Caco-2 (cell line): ENCODE measurements at regions of chr16 and their contacts with region 1.

Region 1: DNA sequence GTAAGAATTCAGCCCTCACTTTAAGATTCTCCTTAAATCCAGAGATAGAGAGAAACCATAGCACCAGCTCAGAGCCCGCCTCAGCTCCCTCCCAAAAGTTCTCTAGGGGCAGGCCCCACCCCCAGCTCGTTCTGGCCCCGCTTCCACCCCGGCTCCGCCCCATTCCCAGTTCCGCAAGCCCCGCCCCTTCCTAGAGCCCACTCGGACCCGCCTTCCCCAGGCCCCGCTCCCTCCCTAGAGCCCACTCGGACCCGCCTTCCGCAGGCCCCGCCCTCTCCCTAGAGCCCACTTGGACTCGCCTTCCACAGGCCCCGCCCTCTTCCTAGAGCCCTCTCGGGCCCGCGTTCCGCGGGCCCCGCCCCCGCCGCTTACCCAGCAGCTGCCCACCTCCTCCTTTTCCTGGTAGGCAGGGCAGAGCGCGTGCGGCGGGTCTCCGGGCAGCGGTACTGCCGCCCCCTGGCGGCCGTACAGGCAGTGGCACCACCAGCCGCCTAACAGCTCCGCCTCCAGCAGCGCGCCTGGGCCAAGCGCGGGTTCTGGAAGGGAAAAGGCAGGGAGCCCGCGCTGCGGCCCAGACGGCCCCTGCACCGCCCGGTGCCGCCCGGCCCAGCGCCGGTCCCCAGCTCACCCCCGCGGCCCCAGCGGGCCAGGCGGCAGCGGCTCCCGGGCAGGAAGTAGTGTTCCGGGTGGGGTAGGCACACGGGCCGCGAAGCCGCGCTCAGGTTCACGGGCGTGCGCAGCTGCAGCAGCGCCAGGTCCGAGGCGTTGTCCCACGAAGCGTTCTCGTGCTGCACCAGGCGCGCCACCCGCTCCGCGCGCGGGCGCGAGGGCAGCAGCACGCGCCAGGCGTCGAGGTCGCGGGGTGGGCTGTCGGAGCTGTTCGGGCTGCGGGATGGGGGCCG is 6.8 kb upstream of the PRSS8 start:
- DNase-seq: peak; percentile 98 to 99
- H3K4me3 ChIP-seq: peak overlapping the region; percentile 46
- H3K4me3 Mint-ChIP-seq: peak overlapping the region; percentile 66
- H3K27ac Mint-ChIP-seq: peak overlapping the region; percentile 83
- H3K4me1 ChIP-seq: peaks cover 54% of the 10 kb centered on the region
- H3K4me1 Mint-ChIP-seq: peaks cover 20% of the 10 kb centered on the region
- H3K27me3 ChIP-seq: no peaks in the 10 kb centered on the region
- H3K27me3 Mint-ChIP-seq: no peaks in the 10 kb centered on the region
- CTCF ChIP-seq: peak; percentile 81 to 93

Region 2: GRCh38 chr16:30984669-30985400 is 157.5 kb before region 1 on chr16 and contains the start of gene HSD3B7:
- CTCF ChIA-PET with region 1: interaction called, 13 read pairs
- POLR2A ChIA-PET with region 1: no interaction called
- intact Hi-C with region 1: loop called (anchors 5 kb)
- DNase-seq: peak; percentile 83 to 90
- H3K4me3 ChIP-seq: 0 out of 2 replicates have a peak within 1 kb of the TSS, but pooled peaks have one; percentile 15
- H3K4me3 Mint-ChIP-seq: peak within 1 kb of the TSS; percentile 59
- H3K27ac Mint-ChIP-seq: no peak within 1 kb of the TSS
- H3K4me1 ChIP-seq: peaks cover 7% of the 10 kb centered on the region
- H3K4me1 Mint-ChIP-seq: peaks cover 6% of the 10 kb centered on the region
- H3K27me3 ChIP-seq: no peaks in the 10 kb centered on the region
- H3K27me3 Mint-ChIP-seq: no peaks in the 10 kb centered on the region
- CTCF ChIP-seq: peak; percentile 83 to 93
- total RNA-seq, gene HSD3B7: 1.3 and 2.4 TPM in 2 replicates

Region 3: GRCh38 chr16:31073968-31074813 is 68.2 kb before region 1 on chr16 and contains the starts of genes ZNF646 and ZNF668:
- CTCF ChIA-PET with region 1: interaction called, 14 read pairs
- POLR2A ChIA-PET with region 1: interaction called, 22 read pairs
- intact Hi-C with region 1: loop called (anchors 1 kb)
- DNase-seq: peak; percentile 94 to 98
- H3K4me3 ChIP-seq: peak within 1 kb of the TSS; percentile 79
- H3K4me3 Mint-ChIP-seq: peak within 1 kb of the TSS; percentile 84
- H3K27ac Mint-ChIP-seq: peak within 1 kb of the TSS; percentile 58
- H3K4me1 ChIP-seq: peaks cover 9% of the 10 kb centered on the region; the same call in 1 of the 2 replicates
- H3K4me1 Mint-ChIP-seq: peaks cover 7% of the 10 kb centered on the region
- H3K27me3 ChIP-seq: no peaks in the 10 kb centered on the region
- H3K27me3 Mint-ChIP-seq: no peaks in the 10 kb centered on the region
- CTCF ChIP-seq: no peak
- total RNA-seq, gene ZNF646: 17.2 and 18.1 TPM in 2 replicates
- total RNA-seq, gene ZNF668: 8.7 and 10.8 TPM in 2 replicates

Region 4: DNA sequence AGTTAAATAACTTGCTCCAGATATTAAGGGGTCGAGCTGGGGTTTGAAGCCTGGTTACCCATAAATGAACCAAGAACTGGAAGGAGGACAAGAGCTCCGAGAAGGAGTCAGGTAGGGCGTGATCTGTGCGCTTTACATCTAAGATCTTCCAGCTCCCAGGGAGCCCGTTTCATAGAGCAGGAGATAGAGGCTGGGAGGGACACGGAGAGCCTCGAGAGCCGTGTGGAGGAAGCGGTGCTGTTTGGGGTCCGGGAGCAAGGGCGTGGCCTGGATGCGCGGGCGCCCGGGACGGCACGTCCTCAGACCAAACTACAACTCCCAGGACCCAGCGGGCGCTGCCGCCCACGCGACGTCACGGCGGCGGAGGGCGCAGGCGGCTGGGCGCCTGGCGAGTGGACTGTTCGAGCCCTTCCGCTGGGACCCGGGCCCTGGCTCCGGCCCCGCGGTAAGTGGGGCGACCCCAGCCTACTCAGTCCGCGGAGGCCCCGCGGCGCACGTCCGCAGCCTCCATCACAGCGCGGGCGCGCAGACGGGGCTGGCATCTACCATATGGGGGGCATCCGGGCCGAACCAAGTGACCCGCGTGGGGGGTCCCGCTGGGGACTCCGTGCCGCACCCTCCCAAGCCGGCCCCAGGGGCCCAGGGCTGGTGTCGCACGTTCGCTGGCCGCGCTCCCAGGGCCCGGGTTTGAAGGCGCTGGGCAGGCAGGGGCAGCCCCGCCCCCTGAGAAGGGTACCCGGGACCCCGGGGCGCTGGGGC is 34.1 kb before region 1 on chr16 and contains the start of gene BCKDK:
- CTCF ChIA-PET with region 1: no interaction called
- POLR2A ChIA-PET with region 1: no interaction called
- intact Hi-C with region 1: loop called (anchors 5 kb)
- DNase-seq: peak; percentile 64 to 75
- H3K4me3 ChIP-seq: peak within 1 kb of the TSS; percentile 97
- H3K4me3 Mint-ChIP-seq: peak within 1 kb of the TSS; percentile 79
- H3K27ac Mint-ChIP-seq: peak within 1 kb of the TSS; percentile 73
- H3K4me1 ChIP-seq: peaks cover under 1% of the 10 kb centered on the region
- H3K4me1 Mint-ChIP-seq: peaks cover 6% of the 10 kb centered on the region
- H3K27me3 ChIP-seq: no peaks in the 10 kb centered on the region
- H3K27me3 Mint-ChIP-seq: no peaks in the 10 kb centered on the region
- CTCF ChIP-seq: no peak
- total RNA-seq, gene BCKDK: 30.5 and 34.1 TPM in 2 replicates

Region 5: GRCh38 chr16:31128711-31129567 is 13.4 kb before region 1 on chr16:
- CTCF ChIA-PET with region 1: interaction called, 30 read pairs
- POLR2A ChIA-PET with region 1: interaction called, 20 read pairs
- intact Hi-C with region 1: loop called (anchors 1 kb)
- DNase-seq: no peak
- H3K4me3 ChIP-seq: no peak overlapping the region
- H3K4me3 Mint-ChIP-seq: no peak overlapping the region
- H3K27ac Mint-ChIP-seq: peak overlapping the region; percentile 75
- H3K4me1 ChIP-seq: peaks cover 37% of the 10 kb centered on the region
- H3K4me1 Mint-ChIP-seq: peaks cover 32% of the 10 kb centered on the region
- H3K27me3 ChIP-seq: no peaks in the 10 kb centered on the region
- H3K27me3 Mint-ChIP-seq: no peaks in the 10 kb centered on the region
- CTCF ChIP-seq: no peak

Region 6: GRCh38 chr16:31458844-31459721 is 316.7 kb after region 1 on chr16 and contains the start of gene ARMC5:
- CTCF ChIA-PET with region 1: interaction called, 5 read pairs
- POLR2A ChIA-PET with region 1: interaction called, 3 read pairs
- intact Hi-C with region 1: loop called (anchors 10 kb)
- DNase-seq: peak; percentile 95 to 97
- H3K4me3 ChIP-seq: peak within 1 kb of the TSS; percentile 78
- H3K4me3 Mint-ChIP-seq: peak within 1 kb of the TSS; percentile 79
- H3K27ac Mint-ChIP-seq: peak within 1 kb of the TSS; percentile 85
- H3K4me1 ChIP-seq: peaks cover 13% of the 10 kb centered on the region; the same call in 1 of the 2 replicates
- H3K4me1 Mint-ChIP-seq: peaks cover 6% of the 10 kb centered on the region
- H3K27me3 ChIP-seq: no peaks in the 10 kb centered on the region
- H3K27me3 Mint-ChIP-seq: no peaks in the 10 kb centered on the region
- CTCF ChIP-seq: peak; percentile 63 to 79
- total RNA-seq, gene ARMC5: 9.7 and 10.2 TPM in 2 replicates